WTC11 (cell line): ENCODE measurements at regions of chr9 and their contacts with region 1.

Region 1: DNA sequence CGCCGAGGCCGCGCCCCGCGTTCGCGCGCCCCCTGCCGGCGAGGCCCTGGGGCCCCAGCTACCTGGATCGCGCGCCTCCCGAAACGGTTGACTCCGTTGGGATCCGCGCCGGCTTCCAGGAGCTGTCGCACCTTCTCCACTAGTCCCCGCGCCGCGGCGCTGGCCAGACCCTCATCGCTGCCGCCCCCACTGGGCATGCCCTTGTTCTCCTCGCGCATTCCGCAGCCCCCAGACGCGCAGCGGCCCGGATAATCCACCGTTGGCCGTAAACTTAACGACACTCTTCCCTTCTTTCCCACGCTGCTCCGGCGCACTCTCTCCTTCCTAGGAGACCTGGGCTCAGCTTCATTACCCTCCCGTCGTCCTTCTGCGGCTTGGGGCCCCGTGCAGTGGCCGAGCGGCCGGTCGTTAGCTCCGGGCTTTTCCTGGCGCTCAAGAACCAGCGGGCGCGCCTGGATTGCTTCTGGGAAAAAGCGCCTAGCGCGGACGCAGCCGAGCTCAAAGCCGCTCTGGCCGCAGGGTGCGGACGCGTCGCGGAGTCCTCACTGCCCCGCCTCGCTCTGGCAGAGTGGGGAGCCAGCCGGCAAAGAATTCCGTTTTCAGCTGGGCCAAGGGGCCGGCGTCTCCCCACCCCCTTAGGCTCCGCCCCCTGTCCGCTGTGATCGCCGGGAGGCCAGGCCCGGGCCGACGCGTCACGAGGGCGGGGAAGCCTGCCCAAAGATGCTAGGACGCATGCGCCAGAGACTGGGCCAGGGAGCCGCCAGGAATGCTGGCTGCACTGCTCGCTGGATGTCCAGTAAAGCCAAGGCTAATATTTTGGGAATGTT is at the start of gene CDKN2B:
- DNase-seq: peak; percentile 96
- ATAC-seq: peak; percentile 84
- H3K4me3 Mint-ChIP-seq: peak within 1 kb of the TSS; percentile 91
- H3K27ac Mint-ChIP-seq: no peak within 1 kb of the TSS
- H3K4me1 Mint-ChIP-seq: peaks cover 26% of the 10 kb centered on the region
- H3K27me3 Mint-ChIP-seq: peaks cover 90% of the 10 kb centered on the region
- CTCF ChIP-seq: peak; percentile 92
- total RNA-seq, gene CDKN2B: 0.13 to 0.73 TPM (median 0.46 TPM) in 3 replicates

Region 2: GRCh38 chr9:21802195-21803000 is 206.6 kb before region 1 on chr9 and contains the start of gene MTAP:
- CTCF ChIA-PET with region 1: interaction called, 10 read pairs
- POLR2A ChIA-PET with region 1: interaction called, 6 read pairs
- DNase-seq: peak; percentile 89
- ATAC-seq: peak; percentile 96
- H3K4me3 Mint-ChIP-seq: peak within 1 kb of the TSS; percentile 99
- H3K27ac Mint-ChIP-seq: peak within 1 kb of the TSS; percentile 97
- H3K4me1 Mint-ChIP-seq: peaks cover 35% of the 10 kb centered on the region
- H3K27me3 Mint-ChIP-seq: peaks cover 43% of the 10 kb centered on the region
- CTCF ChIP-seq: no peak
- total RNA-seq, gene MTAP: 71.8 to 84.3 TPM (median 73.9 TPM) in 3 replicates

Region 3: GRCh38 chr9:21968331-21969010 is 40.5 kb before region 1 on chr9:
- CTCF ChIA-PET with region 1: interaction called, 60 read pairs
- POLR2A ChIA-PET with region 1: no interaction called
- DNase-seq: peak; percentile 32
- ATAC-seq: peak; percentile 5
- H3K4me3 Mint-ChIP-seq: peak overlapping the region; percentile 45
- H3K27ac Mint-ChIP-seq: no peak overlapping the region
- H3K4me1 Mint-ChIP-seq: peaks cover 60% of the 10 kb centered on the region
- H3K27me3 Mint-ChIP-seq: peaks cover 100% of the 10 kb centered on the region
- CTCF ChIP-seq: no peak

Region 4: GRCh38 chr9:21995177-21996086 is 13.5 kb before region 1 on chr9:
- CTCF ChIA-PET with region 1: interaction called, 42 read pairs
- POLR2A ChIA-PET with region 1: interaction called, 5 read pairs
- DNase-seq: peak; percentile 79
- ATAC-seq: peak; percentile 50
- H3K4me3 Mint-ChIP-seq: peak overlapping the region; percentile 63
- H3K27ac Mint-ChIP-seq: no peak overlapping the region
- H3K4me1 Mint-ChIP-seq: peaks cover 36% of the 10 kb centered on the region
- H3K27me3 Mint-ChIP-seq: peaks cover 94% of the 10 kb centered on the region
- CTCF ChIP-seq: no peak

Region 5: GRCh38 chr9:22119537-22120158 is 110.7 kb after region 1 on chr9:
- CTCF ChIA-PET with region 1: interaction called, 16 read pairs
- POLR2A ChIA-PET with region 1: no interaction called
- DNase-seq: no peak
- ATAC-seq: peak; percentile 69
- H3K4me3 Mint-ChIP-seq: no peak overlapping the region
- H3K27ac Mint-ChIP-seq: no peak overlapping the region
- H3K4me1 Mint-ChIP-seq: peaks cover 19% of the 10 kb centered on the region
- H3K27me3 Mint-ChIP-seq: no peaks in the 10 kb centered on the region; the same call in 1 of the 2 replicates
- CTCF ChIP-seq: no peak

Region 6: DNA sequence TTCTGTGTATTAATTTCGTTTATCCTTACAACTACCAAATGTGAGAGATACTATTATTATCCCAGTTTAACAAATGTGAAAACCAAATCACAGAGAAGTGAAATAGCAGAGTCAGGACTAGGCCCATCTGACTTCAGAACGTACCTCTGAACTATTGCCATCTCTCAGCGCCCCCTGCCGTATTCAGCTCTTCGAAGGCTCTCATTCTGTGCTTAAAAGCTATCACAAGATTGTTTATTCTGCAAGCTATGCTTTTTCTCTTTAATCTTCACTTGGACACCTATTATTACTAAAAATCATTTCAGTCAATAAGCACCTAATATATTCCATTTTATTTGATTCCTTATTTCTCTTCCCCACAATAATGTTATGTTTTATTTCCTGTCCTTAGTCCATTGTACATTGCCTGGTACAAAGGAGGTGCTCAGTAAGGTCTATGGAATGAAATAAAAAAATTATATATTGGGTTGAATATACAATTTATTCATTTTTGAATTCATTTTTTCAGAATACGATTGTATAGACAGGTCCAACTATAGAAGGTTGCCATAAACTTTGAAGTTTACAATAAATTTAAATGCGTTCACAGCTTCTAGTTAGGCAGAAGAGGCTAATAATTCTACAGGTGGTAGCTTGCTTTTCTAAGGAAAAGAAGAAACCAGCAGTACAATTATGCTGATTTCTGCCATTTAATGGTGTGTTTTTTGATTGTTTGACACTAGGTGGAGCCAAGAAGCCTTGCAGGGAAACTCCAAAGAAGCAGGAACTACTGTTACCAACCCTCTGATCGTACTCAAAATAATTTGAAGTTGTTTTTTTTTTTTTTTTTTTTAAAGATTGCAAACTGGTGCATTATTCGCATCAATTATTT is 235.4 kb after region 1 on chr9:
- CTCF ChIA-PET with region 1: interaction called, 20 read pairs
- POLR2A ChIA-PET with region 1: no interaction called
- DNase-seq: peak; percentile 55
- ATAC-seq: peak; percentile 77
- H3K4me3 Mint-ChIP-seq: no peak overlapping the region
- H3K27ac Mint-ChIP-seq: no peak overlapping the region
- H3K4me1 Mint-ChIP-seq: no peaks in the 10 kb centered on the region
- H3K27me3 Mint-ChIP-seq: no peaks in the 10 kb centered on the region
- CTCF ChIP-seq: no peak; the same call in 1 of the 2 replicates